ENCODE measurements at regions of chr3 and their contacts with region 1.

Region 1: DNA sequence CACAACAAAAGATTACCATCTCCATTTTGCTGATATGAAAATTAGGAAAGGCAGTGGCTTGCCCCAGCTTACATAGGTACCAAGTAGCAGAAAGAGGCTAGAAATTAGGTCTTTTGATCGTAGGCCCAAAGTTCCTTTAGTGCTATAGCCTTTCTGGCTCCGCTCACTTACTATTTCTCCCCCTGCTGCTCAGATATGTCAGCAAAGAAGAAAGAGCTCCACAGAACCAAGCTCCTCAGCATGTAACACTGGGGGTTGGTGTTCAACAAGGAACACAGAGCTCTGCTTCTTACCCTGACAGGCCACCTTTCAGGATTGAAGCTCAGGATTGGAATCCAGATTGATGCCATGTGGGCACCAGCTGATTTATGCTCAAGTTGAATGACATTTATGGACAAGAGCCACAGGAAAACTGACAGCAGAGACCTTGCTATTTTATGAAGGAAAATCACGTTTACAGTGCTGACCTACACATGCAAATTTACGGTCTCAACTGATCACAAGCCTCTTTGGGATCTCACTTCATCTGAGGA is 6.1 kb upstream of the IL12A start:
- DNase-seq: no peak
- ATAC-seq: peak; percentile 90
- H3K4me3 Mint-ChIP-seq: no peak overlapping the region
- H3K27ac Mint-ChIP-seq: no peak overlapping the region
- H3K4me1 Mint-ChIP-seq: no peaks in the 10 kb centered on the region
- H3K27me3 Mint-ChIP-seq: peaks cover 3% of the 10 kb centered on the region
- CTCF ChIP-seq: no peak

Region 2: DNA sequence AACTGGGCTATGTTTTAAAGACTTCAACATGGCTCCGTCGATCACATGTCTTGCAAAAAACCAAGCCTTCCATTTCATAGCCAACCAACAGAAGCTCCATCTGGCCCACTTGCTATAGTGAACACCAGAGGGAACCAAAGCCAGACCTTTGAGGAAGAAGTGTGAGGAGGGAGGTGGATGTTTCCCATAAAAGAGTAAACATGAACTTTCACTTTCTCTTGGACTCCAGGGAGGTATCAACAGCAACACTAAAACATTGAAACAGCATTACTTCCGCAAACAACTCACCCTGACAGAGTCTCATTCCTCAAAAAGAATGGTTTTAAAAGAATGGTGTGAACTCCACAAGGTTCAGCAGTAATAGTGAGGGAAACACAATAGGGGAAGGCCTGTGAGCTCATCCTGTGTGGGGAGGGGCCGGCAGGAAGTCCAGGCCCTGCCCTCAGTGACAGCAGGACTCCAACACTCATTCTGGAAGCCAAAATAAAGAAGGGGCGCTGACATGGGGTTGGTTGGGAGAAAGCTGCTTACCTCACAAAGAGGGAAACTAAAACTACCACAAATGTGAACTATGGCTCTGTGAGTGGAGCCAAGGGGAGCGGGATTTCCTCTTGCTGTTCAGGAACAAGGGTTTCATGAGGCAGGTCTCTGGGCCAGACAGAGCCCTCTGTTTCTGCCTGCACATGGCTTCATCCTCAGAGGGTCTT is 52.9 kb before region 1 on chr3:
- CTCF ChIA-PET with region 1: interaction called, 11 read pairs
- POLR2A ChIA-PET with region 1: no interaction called
- DNase-seq: no peak
- ATAC-seq: peak; percentile 81
- H3K4me3 Mint-ChIP-seq: no peak overlapping the region
- H3K27ac Mint-ChIP-seq: no peak overlapping the region
- H3K4me1 Mint-ChIP-seq: peaks cover 4% of the 10 kb centered on the region
- H3K27me3 Mint-ChIP-seq: peaks cover 2% of the 10 kb centered on the region; the same call in 1 of the 2 replicates
- CTCF ChIP-seq: no peak